ENCODE measurements at regions of chr17 and their contacts with region 1.

Region 1: DNA sequence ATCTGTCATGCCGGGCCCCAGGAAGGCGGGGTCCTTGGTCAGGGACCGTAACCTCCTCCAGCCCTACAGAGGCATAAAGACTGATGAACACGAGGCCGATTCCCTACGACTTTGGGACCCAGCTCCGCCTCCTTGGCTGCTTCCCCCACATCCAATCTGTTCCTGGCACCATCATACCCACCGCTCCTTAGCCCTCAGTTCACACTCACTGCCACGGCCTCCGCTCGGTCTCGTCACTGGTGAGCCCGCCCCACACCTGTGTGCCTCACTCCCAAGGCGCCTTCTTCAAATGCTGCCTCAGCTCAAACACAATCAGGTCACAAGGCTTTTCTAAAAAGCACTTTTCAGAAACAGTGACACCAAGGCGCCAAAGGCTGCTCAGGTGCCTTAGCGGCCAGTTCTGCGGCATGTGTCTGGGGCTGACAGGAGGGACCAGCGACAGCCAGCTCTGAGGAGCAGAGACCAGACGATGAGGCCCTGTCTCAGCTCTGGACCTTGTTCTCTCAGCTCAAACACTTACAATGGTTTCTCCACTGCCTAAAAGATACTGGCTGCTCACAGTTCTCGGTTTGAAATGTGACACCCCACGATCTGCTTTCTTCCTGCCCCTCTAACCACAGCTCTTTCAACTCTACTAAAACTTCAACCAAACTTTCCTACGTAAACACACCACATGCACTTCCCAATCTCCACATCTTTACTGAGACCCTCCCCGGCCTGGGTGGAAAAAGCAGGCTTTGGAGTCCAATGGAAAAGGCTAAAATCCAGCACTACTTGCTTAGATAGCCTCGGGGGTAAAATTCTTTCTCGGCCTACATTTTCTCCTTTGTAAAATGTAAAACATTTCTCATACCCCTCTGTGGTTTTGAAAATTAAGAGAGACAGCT is 33.2 kb downstream of the CYB5D2 start:
- DNase-seq: peak; percentile 55
- ATAC-seq: peak; percentile 78
- H3K4me3 Mint-ChIP-seq: peak overlapping the region; percentile 60
- H3K27ac Mint-ChIP-seq: peak overlapping the region; percentile 98
- H3K4me1 Mint-ChIP-seq: peaks cover 48% of the 10 kb centered on the region
- H3K27me3 Mint-ChIP-seq: no peaks in the 10 kb centered on the region
- CTCF ChIP-seq: no peak

Region 2: DNA sequence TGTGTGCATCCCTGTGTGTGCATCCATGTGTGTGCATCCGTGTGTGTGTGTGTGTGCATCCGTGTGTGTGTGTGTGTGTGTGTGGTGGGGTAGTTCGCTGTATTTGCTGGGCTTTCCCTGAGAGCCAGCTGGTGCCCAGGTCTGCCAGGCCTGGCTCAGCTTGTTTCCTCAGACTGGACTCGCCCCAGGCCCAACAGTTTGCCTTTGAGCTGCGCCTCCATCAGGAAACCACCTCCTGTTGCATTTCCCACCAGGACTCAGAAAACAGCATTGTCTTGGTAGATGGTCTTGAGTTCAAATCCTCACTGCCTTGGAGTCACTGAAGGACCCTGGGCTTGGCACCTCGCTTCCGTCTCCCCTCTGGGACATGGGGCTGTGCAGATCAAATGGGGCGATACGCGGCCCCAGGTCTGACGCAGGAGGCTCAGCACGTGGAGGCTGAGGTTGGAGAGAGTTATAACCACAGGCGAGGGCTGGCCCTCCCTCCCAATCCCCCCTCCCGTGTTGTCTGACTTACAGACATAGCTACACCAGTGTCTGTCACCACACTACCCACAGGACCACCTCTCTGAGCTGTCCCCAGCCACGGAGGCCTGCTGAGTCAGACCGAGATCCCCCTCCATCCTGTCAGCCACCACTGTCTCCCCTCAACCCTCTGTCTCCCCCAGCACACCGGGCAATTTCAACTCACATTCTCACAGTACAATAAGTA is 379.9 kb before region 1 on chr17:
- CTCF ChIA-PET with region 1: no interaction called
- POLR2A ChIA-PET with region 1: no interaction called
- intact Hi-C with region 1: no loop called
- DNase-seq: peak; percentile 99
- ATAC-seq: peak; percentile 76
- H3K4me3 Mint-ChIP-seq: peak overlapping the region; percentile 43
- H3K27ac Mint-ChIP-seq: peak overlapping the region; percentile 83
- H3K4me1 Mint-ChIP-seq: peaks cover 66% of the 10 kb centered on the region
- H3K27me3 Mint-ChIP-seq: no peaks in the 10 kb centered on the region
- CTCF ChIP-seq: no peak

Region 3: DNA sequence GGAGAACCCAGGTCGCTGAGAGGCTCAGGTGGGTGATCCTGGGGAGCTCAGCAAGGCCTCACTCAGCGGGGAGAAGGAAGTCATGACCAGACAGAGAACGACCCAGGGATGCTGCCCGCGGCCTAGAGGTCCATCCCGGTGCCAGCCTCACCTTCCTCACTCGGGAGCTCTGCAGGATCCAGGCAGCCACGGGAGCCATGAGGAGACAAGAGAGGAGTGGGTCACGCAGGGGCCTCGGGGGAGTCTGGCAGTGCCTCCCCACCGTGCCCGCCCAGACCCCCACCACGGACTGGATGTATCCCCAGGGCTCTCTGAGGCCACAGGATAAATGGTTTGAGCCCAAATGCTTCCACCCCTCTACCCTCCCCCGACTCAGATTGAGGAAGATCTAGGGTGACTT is 222.6 kb before region 1 on chr17:
- CTCF ChIA-PET with region 1: no interaction called
- POLR2A ChIA-PET with region 1: no interaction called
- intact Hi-C with region 1: no loop called
- DNase-seq: no peak
- ATAC-seq: no peak
- H3K4me3 Mint-ChIP-seq: no peak overlapping the region
- H3K27ac Mint-ChIP-seq: no peak overlapping the region
- H3K4me1 Mint-ChIP-seq: peaks cover 25% of the 10 kb centered on the region
- H3K27me3 Mint-ChIP-seq: no peaks in the 10 kb centered on the region
- CTCF ChIP-seq: no peak

Region 4: DNA sequence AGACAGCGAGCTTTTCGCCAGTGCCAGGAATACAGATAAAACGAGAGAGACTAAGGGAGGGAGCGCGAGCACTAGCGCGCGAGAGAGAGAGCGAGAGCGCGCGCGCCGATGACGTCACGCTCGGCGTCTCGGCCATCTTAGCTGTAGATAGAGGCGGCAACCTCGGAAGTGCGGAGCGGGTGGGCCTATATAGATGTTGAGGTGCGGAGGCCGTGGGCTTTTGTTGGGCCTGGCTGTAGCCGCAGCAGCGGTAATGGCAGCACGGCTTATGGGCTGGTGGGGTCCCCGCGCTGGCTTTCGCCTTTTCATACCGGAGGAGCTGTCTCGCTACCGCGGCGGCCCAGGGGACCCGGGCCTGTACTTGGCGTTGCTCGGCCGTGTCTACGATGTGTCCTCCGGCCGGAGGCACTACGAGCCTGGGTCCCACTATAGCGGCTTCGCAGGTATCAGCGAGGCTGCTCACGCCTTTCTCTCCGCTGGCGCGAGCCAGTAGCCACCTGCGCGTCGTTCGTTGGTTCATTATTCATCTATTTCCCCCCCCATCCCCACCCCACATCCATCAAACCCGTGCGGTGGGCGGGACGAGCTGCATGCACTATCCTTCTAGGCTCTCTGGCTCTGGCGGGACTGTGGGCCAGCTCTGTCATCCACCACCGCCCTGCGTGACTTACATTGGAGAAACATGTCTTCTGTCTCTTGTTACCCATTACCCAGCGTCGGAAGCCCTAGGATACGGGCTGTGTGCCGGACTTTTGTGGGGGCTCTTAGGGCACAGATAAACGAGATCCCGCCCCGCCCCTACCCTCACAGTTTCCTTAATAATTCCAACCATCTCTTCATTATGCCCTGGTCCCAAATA is 32.4 kb before region 1 on chr17:
- CTCF ChIA-PET with region 1: interaction called, 6 read pairs
- POLR2A ChIA-PET with region 1: interaction called, 25 read pairs
- intact Hi-C with region 1: no loop called
- DNase-seq: peak; percentile 94
- ATAC-seq: peak; percentile 81
- H3K4me3 Mint-ChIP-seq: peak overlapping the region; percentile 82
- H3K27ac Mint-ChIP-seq: peak overlapping the region; percentile 98
- H3K4me1 Mint-ChIP-seq: peaks cover 45% of the 10 kb centered on the region
- H3K27me3 Mint-ChIP-seq: no peaks in the 10 kb centered on the region
- CTCF ChIP-seq: no peak

Region 5: DNA sequence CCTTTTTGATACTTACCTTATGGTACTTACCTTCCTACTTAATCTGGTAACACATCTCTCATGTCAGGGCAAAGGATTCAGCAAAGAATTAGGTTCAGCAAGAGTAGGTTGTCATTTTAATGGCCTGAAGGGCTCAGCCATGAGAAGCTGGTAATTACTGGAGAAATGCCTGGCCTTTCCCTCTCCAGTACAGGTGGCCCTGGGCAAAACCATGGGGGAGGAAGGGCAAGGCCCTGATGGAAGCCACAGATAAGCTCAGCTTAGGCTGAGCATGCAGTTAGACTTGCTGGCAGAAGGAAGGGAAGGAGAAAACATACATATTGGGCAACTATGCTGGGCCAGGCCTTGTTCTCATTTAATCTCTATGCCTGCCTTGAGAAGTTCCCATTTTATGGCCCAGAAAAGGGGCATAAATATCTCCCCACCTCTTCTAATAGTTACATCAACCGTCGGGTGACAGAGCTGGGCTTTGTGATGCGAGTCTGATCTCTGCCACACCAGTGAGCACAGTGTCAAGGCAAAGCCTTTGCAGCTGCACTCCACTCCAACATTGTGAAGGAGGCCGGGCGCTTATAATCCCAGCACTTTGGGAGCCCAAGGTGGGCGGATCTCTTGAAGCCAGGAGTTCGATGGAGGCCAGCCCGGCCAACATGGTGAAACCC is 14.5 kb before region 1 on chr17:
- CTCF ChIA-PET with region 1: interaction called, 5 read pairs
- POLR2A ChIA-PET with region 1: interaction called, 15 read pairs
- intact Hi-C with region 1: no loop called
- DNase-seq: no peak
- ATAC-seq: no peak
- H3K4me3 Mint-ChIP-seq: no peak overlapping the region
- H3K27ac Mint-ChIP-seq: peak overlapping the region; percentile 25
- H3K4me1 Mint-ChIP-seq: no peaks in the 10 kb centered on the region
- H3K27me3 Mint-ChIP-seq: no peaks in the 10 kb centered on the region
- CTCF ChIP-seq: no peak

Measured in activated CD8-positive, alpha-beta T cell treated with anti-CD3 and anti-CD28 coated beads for 36 hours (primary cell).